GM13976 (cell line): ENCODE measurements at regions of chr1 and their contacts with region 1.

Region 1: GRCh38 chr1:168439456-168440375 is 104.1 kb downstream of the XCL2 start:
- DNase-seq: peak; percentile 68
- CTCF ChIP-seq: peak; percentile 63

Region 2: GRCh38 chr1:168121401-168122011 is 318.2 kb before region 1 on chr1:
- in situ Hi-C with region 1: no loop called
- DNase-seq: no peak
- CTCF ChIP-seq: no peak

Region 3: GRCh38 chr1:168567007-168567406 is 127.3 kb after region 1 on chr1:
- in situ Hi-C with region 1: loop called (anchors 10 kb)
- DNase-seq: no peak
- CTCF ChIP-seq: no peak

Region 4: DNA sequence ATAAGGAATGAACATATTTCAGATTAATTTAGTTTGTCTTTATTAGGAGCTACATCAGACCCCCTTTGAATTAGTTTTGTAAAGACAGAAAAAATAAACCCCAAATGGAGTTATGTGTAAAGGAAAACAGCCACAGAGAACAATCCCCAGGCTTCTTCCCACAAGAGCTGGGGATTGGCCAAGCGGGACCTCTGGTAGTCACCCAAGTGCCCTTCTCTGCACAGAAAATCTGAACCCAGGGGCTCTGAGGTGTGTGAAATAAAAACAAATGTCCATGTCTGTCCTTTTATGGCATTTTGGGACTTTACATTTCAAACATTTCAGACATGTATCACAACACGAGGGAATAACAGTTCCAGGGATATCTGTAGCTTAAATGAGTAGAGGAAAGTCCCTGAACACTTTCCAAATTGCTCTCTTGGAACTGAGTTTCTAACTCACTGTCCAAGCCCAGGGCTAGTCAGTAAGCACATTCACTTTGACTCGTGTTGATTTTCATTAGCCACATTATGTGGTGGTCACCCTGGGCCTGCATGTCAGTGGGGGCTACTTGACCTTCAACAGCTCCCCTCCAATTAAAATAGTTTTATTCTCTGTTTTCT is 266.8 kb after region 1 on chr1:
- in situ Hi-C with region 1: no loop called
- DNase-seq: no peak
- CTCF ChIP-seq: no peak

Region 5: GRCh38 chr1:169348383-169349036 is 908.8 kb after region 1 on chr1:
- in situ Hi-C with region 1: loop called (anchors 25 kb)
- DNase-seq: peak; percentile 26
- CTCF ChIP-seq: peak; percentile 69